Transverse colon (tissue), 4 donors: ENCODE measurements at regions of chr13 and their contacts with region 1.

Region 1: DNA sequence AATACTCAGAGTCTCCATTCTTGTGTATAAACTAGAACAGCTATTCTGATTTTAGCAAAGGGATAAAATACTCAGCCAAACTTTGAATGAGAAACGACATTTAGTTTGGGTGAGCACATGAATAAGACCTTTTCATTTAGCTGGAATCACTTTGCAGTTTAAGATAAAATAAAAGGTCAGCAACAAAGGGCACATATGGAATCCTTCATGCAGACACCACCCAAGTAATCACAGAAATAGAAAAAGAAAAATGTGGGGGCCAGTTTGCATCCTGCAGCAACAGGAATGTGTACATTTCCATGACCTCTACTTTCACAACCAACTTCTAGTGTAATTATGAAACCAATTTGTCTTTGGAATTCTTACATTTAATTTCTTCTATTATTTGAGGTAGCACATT is 1637.4 kb downstream of the PCDH9 start:
- DNase-seq: no peak
- H3K4me3 ChIP-seq: no peak overlapping the region
- H3K27ac ChIP-seq: no peak overlapping the region
- H3K4me1 ChIP-seq: no peaks in the 10 kb centered on the region
- H3K27me3 ChIP-seq: no peaks in the 10 kb centered on the region
- CTCF ChIP-seq: no peak
- EP300 ChIP-seq: no peak
- POLR2A ChIP-seq: no peak

Region 2: GRCh38 chr13:65613004-65613403 is 20.3 kb after region 1 on chr13:
- in situ Hi-C with region 1: no loop called
- intact Hi-C with region 1: loop called (anchors 1 kb)
- DNase-seq: no peak
- H3K4me3 ChIP-seq: no peak overlapping the region
- H3K27ac ChIP-seq: no peak overlapping the region
- H3K4me1 ChIP-seq: no peaks in the 10 kb centered on the region
- H3K27me3 ChIP-seq: no peaks in the 10 kb centered on the region
- CTCF ChIP-seq: no peak
- EP300 ChIP-seq: no peak
- POLR2A ChIP-seq: no peak

Region 3: GRCh38 chr13:65623148-65623547 is 30.4 kb after region 1 on chr13:
- in situ Hi-C with region 1: no loop called
- intact Hi-C with region 1: no loop called
- DNase-seq: no peak
- H3K4me3 ChIP-seq: no peak overlapping the region
- H3K27ac ChIP-seq: no peak overlapping the region
- H3K4me1 ChIP-seq: no peaks in the 10 kb centered on the region
- H3K27me3 ChIP-seq: no peaks in the 10 kb centered on the region
- CTCF ChIP-seq: no peak
- EP300 ChIP-seq: no peak
- POLR2A ChIP-seq: no peak